Left cardiac atrium (tissue), 4 donors: ENCODE measurements at regions of chr21 and their contacts with region 1.

Region 1: DNA sequence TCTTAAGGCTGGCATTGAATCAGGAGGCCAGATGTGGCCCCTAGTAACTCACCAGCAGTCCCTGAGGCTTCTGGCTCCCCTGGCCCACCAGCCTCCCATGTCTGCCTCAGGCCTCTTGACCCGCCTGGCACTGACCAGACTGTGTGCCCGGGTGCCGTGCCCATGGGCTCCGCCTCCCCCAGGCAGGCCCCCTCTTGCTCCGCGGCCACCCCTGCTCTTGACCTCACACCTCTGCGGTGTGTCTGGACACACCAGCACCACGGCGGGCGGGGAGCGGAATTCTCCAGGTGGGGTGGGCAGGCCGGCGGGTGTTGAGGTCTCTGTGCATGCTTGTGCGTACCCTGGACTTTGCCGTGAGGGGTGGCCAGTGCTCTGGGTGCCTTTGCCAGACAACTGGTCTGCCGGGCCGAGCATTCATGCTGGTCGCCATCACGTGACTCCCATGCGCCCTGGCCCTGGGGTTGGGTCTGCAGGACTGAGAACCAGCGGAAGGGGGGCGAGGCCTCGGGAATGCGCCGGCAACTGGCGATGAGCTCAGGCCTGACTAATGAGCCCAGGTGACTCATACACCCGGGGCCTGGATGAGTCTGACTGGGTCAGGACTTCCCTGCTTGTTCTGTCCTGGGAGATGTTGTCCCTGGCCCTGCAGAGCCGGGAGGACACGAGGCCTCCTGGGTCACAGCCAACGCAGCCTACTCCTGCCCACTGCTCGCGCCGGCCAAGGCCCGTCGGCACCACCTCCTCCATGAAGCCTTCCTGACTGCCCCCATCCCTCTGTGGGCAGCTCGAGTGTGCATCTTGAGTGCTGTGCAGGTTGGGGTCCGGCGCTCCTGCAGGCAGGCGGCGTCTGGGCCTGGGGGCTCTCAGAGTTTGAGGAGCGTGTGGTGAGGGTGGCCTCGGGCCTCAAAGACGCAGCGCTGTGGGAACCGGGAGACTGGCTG is 22.6 kb downstream of the COL18A1 start:
- DNase-seq: peak; percentile 82
- ATAC-seq: peak; percentile 45 to 91

Region 2: GRCh38 chr21:45292399-45293219 is 135.0 kb before region 1 on chr21:
- intact Hi-C with region 1: no loop called
- DNase-seq: peak; percentile 90
- ATAC-seq: peak; percentile 72 to 73

Region 3: GRCh38 chr21:45406801-45407628 is 20.6 kb before region 1 on chr21:
- intact Hi-C with region 1: loop called in 1 of 2 experiments (anchors 1 kb)
- DNase-seq: peak; percentile 36
- ATAC-seq: no peak

Region 4: GRCh38 chr21:45470773-45471524 is 43.3 kb after region 1 on chr21:
- intact Hi-C with region 1: no loop called
- DNase-seq: peak; percentile 54
- ATAC-seq: peak; percentile 61 to 65

Region 5: GRCh38 chr21:45542242-45542666 is 114.7 kb after region 1 on chr21 and contains the start of gene SLC19A1:
- intact Hi-C with region 1: no loop called
- DNase-seq: peak; percentile 84
- ATAC-seq: peak; percentile 89 to 92
- total RNA-seq, gene SLC19A1: 5.4 to 8.6 TPM